Natural killer cell (primary cell): ENCODE measurements at regions of chr13 and their contacts with region 1.

Region 1: GRCh38 chr13:22061806-22062391 is 391.0 kb downstream of the FGF9 start:
- DNase-seq: peak; percentile 29 to 80
- ATAC-seq: peak; percentile 66 to 84 (median 82)
- H3K4me3 ChIP-seq: peak overlapping the region; percentile 16
- H3K4me3 Mint-ChIP-seq: peak overlapping the region; percentile 75
- H3K27ac ChIP-seq: peak overlapping the region; percentile 95
- H3K27ac Mint-ChIP-seq: peak overlapping the region; percentile 95 to 96
- H3K4me1 ChIP-seq: peaks cover 48% of the 10 kb centered on the region
- H3K4me1 Mint-ChIP-seq: peaks cover 55 to 60% of the 10 kb centered on the region in 2 donors
- H3K27me3 ChIP-seq: no peaks in the 10 kb centered on the region
- H3K27me3 Mint-ChIP-seq: no peaks in the 10 kb centered on the region
- CTCF ChIP-seq: no peak

Region 2: DNA sequence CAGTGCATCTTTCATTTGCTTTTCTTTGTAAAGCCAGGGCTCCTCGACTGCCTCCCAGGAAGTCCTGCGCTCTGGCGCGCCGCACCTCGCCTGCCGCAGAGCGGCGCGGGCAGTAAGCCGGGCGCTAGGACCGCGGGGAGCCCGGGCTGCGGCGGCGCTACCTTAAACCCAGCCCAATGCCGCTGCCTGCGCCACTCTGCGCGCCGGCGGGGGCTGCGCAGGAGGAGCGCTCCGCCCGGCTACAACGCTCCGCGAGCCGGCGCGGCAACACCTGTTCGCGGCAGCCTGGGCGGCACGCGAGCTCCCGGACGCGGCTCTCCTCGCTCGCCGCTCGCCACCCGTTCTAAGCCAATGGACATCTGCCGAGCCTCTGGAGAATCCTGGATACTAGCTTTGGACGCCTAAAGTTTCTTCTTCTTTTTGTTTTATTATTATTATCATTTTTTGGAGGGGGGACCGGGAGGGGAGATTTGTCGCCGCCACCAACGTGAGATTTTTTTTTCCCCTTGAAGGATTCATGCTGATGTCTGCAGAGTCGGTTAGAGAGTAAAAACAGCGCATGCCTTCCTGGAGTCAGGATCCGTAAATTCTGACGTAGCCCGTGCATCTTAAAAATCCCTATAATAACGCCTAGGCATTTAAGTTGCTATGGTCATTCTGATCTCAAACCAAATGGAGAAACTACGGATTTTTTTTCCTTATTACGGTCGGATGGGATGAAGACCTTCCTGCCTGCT is 390.8 kb before region 1 on chr13 and contains the start of gene FGF9:
- intact Hi-C with region 1: loop called (anchors 2 kb)
- DNase-seq: peak; percentile 78 to 92
- ATAC-seq: peak; percentile 73 to 86 (median 77)
- H3K4me3 ChIP-seq: peak within 1 kb of the TSS; percentile 61
- H3K4me3 Mint-ChIP-seq: peak within 1 kb of the TSS; percentile 98
- H3K27ac ChIP-seq: no peak within 1 kb of the TSS
- H3K27ac Mint-ChIP-seq: peak within 1 kb of the TSS; percentile 79 to 87
- H3K4me1 ChIP-seq: peaks cover 55% of the 10 kb centered on the region
- H3K4me1 Mint-ChIP-seq: peaks cover 49 to 58% of the 10 kb centered on the region in 2 donors
- H3K27me3 ChIP-seq: peaks cover 27% of the 10 kb centered on the region
- H3K27me3 Mint-ChIP-seq: peaks cover 16 to 36% of the 10 kb centered on the region in 2 donors
- CTCF ChIP-seq: no peak
- total RNA-seq, gene FGF9: 0.28 to 1.2 (median 0.80) TPM

Region 3: DNA sequence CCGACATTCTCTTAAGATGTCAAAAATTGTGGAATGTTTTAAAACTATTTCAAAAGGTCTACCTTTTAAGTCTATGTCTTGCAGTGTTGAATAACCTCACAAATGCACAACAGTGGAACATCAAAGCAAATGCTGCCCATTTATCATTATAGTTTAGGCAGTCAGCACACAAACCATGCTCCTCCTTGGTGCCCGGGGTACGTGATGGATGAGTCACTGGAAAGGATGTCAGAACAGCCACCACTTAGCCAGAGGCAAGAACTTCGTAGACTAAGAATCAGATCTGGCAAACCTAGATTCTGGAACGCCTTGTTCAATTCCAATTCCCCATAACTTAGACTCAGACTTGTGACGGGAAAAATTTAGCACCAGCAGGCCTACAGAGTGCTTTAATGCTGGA is 47.4 kb before region 1 on chr13:
- intact Hi-C with region 1: no loop called
- DNase-seq: no peak
- ATAC-seq: no peak
- H3K4me3 ChIP-seq: no peak overlapping the region
- H3K4me3 Mint-ChIP-seq: no peak overlapping the region
- H3K27ac ChIP-seq: no peak overlapping the region
- H3K27ac Mint-ChIP-seq: no peak overlapping the region
- H3K4me1 ChIP-seq: peaks cover 2% of the 10 kb centered on the region
- H3K4me1 Mint-ChIP-seq: peaks cover 8 to 11% of the 10 kb centered on the region in 2 donors
- H3K27me3 ChIP-seq: no peaks in the 10 kb centered on the region
- H3K27me3 Mint-ChIP-seq: no peaks in the 10 kb centered on the region
- CTCF ChIP-seq: no peak

Region 4: GRCh38 chr13:22073718-22074117 is 11.8 kb after region 1 on chr13:
- intact Hi-C with region 1: no loop called
- DNase-seq: no peak
- ATAC-seq: no peak
- H3K4me3 ChIP-seq: no peak overlapping the region
- H3K4me3 Mint-ChIP-seq: no peak overlapping the region
- H3K27ac ChIP-seq: no peak overlapping the region
- H3K27ac Mint-ChIP-seq: no peak overlapping the region
- H3K4me1 ChIP-seq: no peaks in the 10 kb centered on the region
- H3K4me1 Mint-ChIP-seq: peaks cover 0 to 6% of the 10 kb centered on the region in 2 donors
- H3K27me3 ChIP-seq: no peaks in the 10 kb centered on the region
- H3K27me3 Mint-ChIP-seq: peaks cover 0 to 17% of the 10 kb centered on the region in 2 donors
- CTCF ChIP-seq: no peak

Region 5: DNA sequence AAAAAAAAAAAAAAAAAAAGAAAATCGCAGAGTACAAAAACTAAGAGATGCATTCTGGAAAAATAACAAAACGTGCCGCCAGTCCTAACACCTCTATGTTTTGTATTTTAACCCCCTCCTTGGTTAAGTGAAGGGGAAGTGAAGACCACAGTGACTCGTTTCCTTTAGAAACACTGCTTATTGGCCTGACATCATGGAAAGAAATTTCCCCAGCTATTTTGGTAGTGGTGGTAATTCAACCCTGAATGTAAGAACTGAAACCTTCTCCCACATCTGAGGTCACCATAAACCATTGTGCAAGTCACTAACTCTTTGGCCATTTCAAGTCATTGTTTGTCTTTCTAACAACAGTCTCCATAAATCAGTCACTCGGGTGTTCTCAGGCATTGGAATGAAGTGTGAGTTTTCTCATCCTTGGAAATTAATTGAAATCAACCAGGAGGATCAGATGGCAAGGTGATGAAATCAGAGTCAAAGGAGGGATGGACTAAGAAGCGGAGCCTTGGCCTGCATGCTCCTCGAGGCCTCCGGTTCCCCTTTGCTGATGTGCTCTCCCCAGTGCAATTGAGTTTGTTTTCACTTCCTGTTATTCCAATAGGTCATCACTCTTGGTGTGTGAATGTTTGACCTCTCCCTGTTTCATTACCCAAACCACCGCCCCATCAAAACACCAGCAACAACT is 52.9 kb after region 1 on chr13:
- intact Hi-C with region 1: loop called (anchors 1 kb)
- DNase-seq: peak in 1 of 2 donors; percentile 88
- ATAC-seq: peak; percentile 86 to 93 (median 89)
- H3K4me3 ChIP-seq: no peak overlapping the region
- H3K4me3 Mint-ChIP-seq: peak overlapping the region; percentile 49
- H3K27ac ChIP-seq: peak overlapping the region; percentile 87
- H3K27ac Mint-ChIP-seq: peak overlapping the region; percentile 92 to 93
- H3K4me1 ChIP-seq: peaks cover 16% of the 10 kb centered on the region
- H3K4me1 Mint-ChIP-seq: peaks cover 23 to 26% of the 10 kb centered on the region in 2 donors
- H3K27me3 ChIP-seq: no peaks in the 10 kb centered on the region
- H3K27me3 Mint-ChIP-seq: no peaks in the 10 kb centered on the region
- CTCF ChIP-seq: no peak

Region 6: DNA sequence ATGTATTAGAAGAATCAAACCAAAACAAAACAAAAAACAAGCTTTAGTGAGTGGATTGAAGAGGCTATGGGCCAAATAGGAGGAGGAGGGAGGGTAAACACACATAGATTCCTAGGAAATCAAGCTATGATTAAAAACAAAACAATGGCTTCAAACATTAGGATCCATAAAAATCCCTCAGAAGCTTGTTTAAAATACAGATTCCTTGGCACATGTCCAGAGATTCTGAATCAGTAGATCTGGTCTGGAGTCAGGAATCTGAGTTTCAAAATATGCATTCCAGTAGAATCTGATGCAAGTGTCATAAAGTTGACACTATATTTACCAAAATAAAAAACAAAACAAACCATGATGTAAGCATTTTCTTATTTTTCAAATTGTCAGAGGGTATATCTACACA is 426.0 kb after region 1 on chr13:
- intact Hi-C with region 1: no loop called
- DNase-seq: no peak
- ATAC-seq: no peak
- H3K4me3 ChIP-seq: no peak overlapping the region
- H3K4me3 Mint-ChIP-seq: no peak overlapping the region
- H3K27ac ChIP-seq: no peak overlapping the region
- H3K27ac Mint-ChIP-seq: no peak overlapping the region
- H3K4me1 ChIP-seq: no peaks in the 10 kb centered on the region
- H3K4me1 Mint-ChIP-seq: no peaks in the 10 kb centered on the region
- H3K27me3 ChIP-seq: no peaks in the 10 kb centered on the region
- H3K27me3 Mint-ChIP-seq: no peaks in the 10 kb centered on the region
- CTCF ChIP-seq: no peak